ENCODE measurements at regions of chr11 and their contacts with region 1.

Region 1: DNA sequence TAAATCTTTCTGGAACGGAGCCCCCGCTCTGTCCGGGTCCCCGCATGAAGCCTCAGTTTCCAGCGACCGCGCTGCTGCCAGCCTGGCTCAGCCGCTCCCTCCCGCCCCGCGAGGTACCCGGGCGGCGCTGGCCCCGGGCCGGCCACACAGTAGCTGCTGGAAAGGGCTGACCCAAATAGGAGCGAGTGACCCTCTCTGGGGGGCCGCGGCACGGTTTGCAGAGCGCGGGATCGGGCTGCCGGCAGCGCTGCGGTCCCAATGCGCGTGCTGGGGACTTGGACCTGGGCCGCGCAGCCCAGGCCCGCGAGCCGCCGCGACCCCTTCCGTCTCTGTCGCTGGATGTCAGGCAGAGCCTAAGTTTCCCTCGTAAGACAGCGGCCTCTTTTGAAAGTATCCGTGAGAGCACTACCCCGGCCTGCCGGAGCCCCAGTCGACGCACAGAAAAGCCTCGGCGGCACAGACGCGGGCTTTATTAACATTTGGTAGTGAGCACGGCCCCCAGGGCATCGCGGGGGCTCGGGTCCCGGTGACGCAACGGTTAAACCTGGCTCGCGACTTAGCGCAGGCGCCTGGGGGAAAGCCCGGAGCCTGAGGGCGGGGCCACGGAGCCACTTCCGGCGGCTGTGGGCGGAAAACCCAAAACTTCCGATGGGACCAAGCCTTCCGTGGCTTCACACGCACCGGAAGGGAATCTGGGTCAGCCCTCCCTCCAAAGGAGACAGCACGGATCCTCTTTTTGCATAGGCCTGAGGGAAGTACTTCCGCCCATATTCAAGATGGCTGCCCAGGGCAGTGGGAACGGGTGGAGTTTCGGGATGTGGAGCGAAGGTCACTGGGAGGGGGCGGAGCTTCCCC is 14.9 kb downstream of the BAD start:
- DNase-seq: peak; percentile 86
- H3K4me3 ChIP-seq: peak overlapping the region; percentile 60 to 76
- H3K27ac ChIP-seq: peak overlapping the region; percentile 97 to 99
- H3K4me1 ChIP-seq: peaks cover 12 to 42% of the 10 kb centered on the region in 2 experiments; a peak in 2 of 4 replicates
- H3K27me3 ChIP-seq: no peaks in the 10 kb centered on the region
- CTCF ChIP-seq: 0 out of 2 replicates have a peak, but pooled peaks have one; percentile 14
- EP300 ChIP-seq: no peak; a peak in 1 of 4 replicates
- RAD21 ChIP-seq: peak; percentile 44

Region 2: DNA sequence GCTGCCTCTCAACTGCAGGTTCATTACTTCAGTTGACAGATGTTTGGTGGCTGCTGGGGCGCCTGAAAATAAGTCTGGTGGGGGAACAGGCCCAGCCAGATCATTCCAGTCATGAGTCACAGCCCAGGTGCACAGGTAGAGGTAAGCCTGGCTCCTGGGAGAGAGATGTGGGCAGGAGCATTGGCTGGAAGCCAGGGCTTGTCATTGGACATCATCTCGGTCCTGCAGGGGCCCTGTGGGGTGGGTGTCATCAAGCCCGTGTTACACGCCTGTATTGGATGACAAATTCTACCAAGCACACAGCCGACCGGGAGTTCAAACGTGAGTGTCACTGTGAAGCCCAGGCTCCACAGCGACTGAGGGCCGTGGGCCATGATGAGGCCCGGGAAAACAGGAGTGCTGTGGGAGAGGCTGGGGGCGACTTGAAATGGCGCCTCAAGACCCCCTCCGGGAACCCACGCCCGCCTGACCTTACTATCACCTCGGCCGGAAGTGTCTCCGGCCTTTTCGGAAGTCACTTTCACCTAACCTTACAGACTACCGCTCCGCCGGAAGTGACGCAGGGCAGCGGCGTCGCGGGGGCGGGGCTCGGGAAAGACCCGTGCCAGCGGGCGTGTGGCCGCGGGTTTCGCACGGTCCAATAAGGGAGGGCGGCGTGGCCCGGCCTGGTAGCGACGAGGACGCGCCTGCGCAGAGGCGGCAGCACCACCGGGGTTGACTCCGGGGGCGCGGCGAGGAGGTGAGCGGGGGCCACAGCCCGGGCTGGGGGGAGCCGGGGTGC is 29.0 kb before region 1 on chr11 and contains the start of gene FKBP2:
- CTCF ChIA-PET with region 1: interaction called, 20 read pairs
- POLR2A ChIA-PET with region 1: interaction called, 112 read pairs
- DNase-seq: peak; percentile 97
- H3K4me3 ChIP-seq: peak within 1 kb of the TSS; percentile 78 to 92
- H3K27ac ChIP-seq: peak within 1 kb of the TSS; percentile 94 to 98
- H3K4me1 ChIP-seq: peaks cover 16 to 41% of the 10 kb centered on the region in 2 experiments; a peak in 2 of 4 replicates
- H3K27me3 ChIP-seq: no peaks in the 10 kb centered on the region
- CTCF ChIP-seq: no peak
- EP300 ChIP-seq: no peak
- RAD21 ChIP-seq: no peak
- polyA plus RNA-seq, gene FKBP2: 84.8 and 127 TPM in 2 replicates

Region 3: GRCh38 chr11:64284048-64284961 is 14.7 kb after region 1 on chr11 and contains the start of gene BAD:
- CTCF ChIA-PET with region 1: interaction called, 46 read pairs
- POLR2A ChIA-PET with region 1: interaction called, 33 read pairs
- DNase-seq: peak; percentile 99
- H3K4me3 ChIP-seq: peak within 1 kb of the TSS; percentile 60 to 95
- H3K27ac ChIP-seq: peak within 1 kb of the TSS; percentile 87 to 96
- H3K4me1 ChIP-seq: peaks cover 8 to 21% of the 10 kb centered on the region in 2 experiments; a peak in 2 of 4 replicates
- H3K27me3 ChIP-seq: no peaks in the 10 kb centered on the region
- CTCF ChIP-seq: no peak
- EP300 ChIP-seq: no peak
- RAD21 ChIP-seq: no peak
- polyA plus RNA-seq, gene BAD: 75.6 and 80.9 TPM in 2 replicates

Region 4: DNA sequence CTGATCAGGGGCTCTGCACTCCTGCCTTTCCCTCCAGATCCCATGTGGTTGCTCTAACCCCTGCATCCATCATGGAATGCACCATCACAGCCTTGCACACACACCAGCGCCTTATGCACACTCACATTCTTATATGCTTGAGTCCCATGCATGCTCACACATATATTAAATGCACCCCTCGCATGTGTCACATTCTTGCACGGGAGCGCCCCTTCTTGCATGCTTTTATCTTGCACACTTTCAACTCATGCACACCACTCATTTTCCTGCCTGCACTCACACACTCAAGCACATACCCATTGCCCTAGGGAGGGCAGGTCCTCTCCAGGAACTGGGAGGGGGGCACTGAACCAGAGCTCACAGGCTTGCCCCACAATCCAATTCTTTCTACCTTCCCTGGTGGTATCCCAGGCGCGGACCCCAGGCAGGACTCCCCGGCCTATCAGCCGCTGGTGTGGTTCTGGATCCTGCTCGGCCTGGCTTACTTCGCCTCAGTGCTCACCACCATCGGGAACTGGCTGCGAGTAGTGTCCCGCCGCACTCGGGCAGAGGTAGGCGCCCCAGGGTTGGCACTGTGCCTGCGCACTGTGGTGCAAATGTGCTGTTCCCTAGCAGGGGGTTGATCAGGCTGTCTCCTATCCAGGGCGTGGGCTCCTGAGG is 28.2 kb after region 1 on chr11:
- CTCF ChIA-PET with region 1: interaction called, 139 read pairs
- POLR2A ChIA-PET with region 1: interaction called, 54 read pairs
- DNase-seq: no peak
- H3K4me3 ChIP-seq: no peak overlapping the region
- H3K27ac ChIP-seq: no peak overlapping the region
- H3K4me1 ChIP-seq: no peaks in the 10 kb centered on the region
- H3K27me3 ChIP-seq: peaks cover 5% of the 10 kb centered on the region; the same call in 1 of the 2 replicates
- CTCF ChIP-seq: no peak
- EP300 ChIP-seq: no peak
- RAD21 ChIP-seq: no peak

Region 5: DNA sequence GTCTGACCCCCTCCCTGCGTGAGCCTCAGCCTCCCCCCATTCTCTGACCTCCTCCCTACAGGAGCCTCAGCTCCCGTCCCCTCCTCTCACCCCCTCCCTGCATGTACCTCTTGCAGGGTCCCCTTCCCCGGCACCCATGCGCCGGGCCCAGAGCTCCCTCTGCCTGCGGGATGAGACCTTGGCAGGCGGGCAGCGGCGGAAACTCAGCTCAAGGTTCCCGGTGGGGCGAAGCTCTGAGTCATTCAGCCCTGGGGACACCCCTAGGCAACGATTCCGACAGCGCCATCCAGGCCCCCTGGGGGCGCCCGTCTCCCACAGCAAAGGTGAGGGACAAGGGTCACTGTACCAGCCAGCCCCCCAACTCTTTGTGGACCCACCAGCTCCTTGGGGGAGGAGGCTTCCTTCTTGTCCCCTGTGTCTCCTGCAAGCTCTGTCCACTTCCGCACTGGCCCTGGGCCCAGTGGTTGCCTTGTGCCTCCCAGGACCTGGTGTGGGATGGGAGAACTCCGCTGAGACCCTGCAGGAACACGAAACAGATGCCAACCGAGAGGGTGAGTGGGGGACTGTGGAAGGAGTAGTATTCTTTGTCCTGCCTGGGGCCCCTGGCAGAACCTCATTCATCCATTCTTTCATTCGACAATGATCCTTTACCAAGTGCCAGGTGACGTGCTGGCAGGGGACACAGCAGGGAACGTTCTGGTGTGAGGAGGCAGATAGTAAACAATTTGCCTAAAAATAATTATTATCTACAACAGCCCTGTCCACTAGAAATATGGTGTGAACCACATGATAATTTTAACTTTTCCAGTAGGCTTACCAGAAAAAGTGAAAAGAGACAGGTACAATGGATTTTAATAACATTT is 85.7 kb after region 1 on chr11:
- CTCF ChIA-PET with region 1: interaction called, 12 read pairs
- POLR2A ChIA-PET with region 1: no interaction called
- DNase-seq: peak; percentile 89
- H3K4me3 ChIP-seq: peak overlapping the region; percentile 18 to 40; a peak in 2 of 4 replicates
- H3K27ac ChIP-seq: peak overlapping the region; percentile 34 to 36; a peak in 3 of 4 replicates
- H3K4me1 ChIP-seq: peaks cover 20 to 28% of the 10 kb centered on the region in 2 experiments; a peak in 3 of 4 replicates
- H3K27me3 ChIP-seq: no peaks in the 10 kb centered on the region
- CTCF ChIP-seq: peak; percentile 74
- EP300 ChIP-seq: no peak
- RAD21 ChIP-seq: peak; percentile 65

Measured in SK-N-SH (cell line).